Mucosa of descending colon (tissue), 3 donors: ENCODE measurements at regions of chr12 and their contacts with region 1.

Region 1: DNA sequence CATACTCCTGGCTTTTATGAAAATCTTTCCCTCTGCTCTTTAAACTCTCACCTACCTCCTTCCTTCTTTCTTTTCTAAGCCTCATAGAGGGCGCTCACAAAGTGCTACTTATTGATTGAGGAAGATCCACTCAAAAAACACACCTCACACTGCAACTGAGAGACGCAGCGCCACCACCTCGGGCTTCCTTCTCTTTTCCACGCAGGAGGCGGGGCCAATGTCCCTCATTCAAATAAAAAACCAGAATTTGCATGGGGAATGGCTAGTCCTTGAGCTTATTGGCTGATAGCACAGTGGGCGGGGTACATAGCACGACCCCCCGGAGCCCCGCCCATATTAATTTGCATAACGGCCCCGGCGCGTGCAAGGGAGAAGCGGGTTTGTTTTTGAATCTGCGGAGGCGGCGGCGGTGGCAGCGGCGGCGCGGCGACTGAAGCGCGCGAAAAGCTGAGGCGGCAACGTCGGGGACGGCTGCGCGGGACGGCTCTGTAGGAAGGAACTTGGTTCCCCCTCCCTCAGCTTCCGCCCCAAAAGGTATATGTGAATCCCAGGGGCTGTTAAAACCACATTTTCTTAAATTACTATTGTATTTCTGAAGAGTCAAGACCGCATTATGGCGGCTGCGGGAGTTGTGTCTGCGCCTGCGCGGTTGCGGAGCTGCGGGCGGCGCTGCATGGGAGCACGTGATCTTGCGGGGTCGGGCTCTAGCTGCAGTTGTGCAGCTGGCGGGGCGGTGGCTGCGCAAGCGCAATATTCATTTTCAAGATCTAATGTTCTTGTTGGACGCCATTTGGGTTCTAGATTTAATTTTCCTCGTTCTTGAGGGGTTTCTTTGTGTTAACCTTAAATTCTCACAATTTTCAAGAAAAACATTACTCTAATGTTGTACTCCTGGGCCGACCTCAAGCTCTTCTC is at the start of gene ATF7IP:
- DNase-seq: peak; percentile 96 to 98 (median 98)
- ATAC-seq: peak; percentile 96
- H3K4me3 ChIP-seq: peak within 1 kb of the TSS; percentile 56
- H3K4me1 ChIP-seq: no peaks in the 10 kb centered on the region
- CTCF ChIP-seq: peak; percentile 21
- total RNA-seq, gene ATF7IP: 40.3 to 84.1 (median 63.2) TPM

Region 2: DNA sequence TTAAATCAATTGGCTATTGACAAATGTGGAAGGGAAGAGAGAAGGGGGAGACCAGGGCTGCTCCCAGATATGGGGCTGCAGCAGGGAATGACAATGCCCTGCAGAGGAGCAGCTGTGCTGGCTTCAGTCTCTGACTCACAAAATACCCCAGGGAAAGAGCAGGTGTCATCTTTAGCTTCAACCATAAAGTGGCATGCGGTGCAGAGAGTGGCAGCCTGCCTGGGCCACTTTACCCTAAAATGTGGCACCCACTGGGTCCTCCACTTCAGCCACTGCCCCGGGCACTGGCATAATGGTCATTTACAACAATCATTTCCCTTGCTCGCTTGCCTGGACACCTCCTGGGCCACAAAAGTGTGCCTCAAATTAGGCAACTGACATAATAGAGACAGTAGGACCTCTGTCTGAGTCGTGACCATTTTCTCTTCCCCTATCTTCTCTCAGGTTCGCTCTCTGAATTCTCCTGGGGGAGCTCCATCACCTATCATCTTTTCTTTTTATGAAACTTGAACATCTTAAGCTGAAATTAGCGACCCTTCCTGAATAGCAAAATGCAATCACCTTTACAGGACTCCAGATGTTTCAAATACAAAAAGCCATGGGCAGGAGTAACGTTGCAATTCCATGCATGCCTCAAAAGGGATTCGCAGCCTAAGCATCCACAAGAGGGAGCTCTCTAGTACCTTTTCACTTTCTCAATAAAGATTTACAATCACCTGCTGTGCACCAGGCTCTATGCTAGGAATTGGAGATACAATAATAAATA is 179.9 kb before region 1 on chr12:
- intact Hi-C with region 1: loop called in 1 of 2 experiments (anchors 10 kb)
- DNase-seq: peak in 1 of 3 donors; percentile 87
- ATAC-seq: peak; percentile 95
- H3K4me3 ChIP-seq: no peak overlapping the region
- H3K4me1 ChIP-seq: peaks cover 6% of the 10 kb centered on the region
- CTCF ChIP-seq: peak; percentile 52

Region 3: DNA sequence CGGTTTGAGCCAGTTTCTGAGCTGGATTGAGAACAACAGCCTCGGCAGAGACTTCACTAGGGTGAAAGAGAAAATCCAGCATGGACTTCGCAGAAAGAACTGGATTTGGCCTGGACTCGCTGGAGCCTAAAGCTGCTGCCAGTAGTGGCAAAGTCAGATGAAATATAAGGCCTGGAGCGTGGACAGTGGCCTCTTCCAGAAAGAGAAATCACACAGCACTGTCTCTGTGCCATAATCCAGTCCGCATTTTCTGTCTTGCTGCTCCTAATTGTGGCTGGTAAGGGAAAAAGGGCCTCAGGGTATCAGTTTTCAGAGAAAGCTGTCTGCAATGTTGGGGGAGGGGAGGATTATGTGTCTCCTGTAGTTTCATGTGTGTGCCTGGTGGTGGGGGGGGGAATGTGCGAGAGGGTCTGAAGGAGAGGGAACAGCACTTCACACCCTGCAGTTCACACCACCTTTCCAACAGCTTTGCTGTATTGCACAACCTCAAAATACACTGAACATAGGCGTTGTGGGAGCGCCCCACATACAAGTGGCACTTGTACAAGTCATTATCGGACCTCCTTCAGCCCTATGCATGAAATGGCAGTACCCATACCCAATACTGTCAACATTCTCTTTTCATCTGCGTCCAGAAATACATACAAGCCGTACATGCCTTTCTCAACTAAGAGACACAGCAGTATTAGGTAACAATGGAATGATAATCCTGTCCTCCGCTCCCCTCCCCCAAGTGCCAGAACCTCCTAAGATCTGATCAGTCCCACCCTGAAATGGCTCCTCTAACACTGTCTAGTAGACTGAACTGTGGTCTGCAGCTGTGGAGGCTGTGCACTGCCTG is 107.6 kb before region 1 on chr12:
- intact Hi-C with region 1: loop called (anchors 5 to 10 kb)
- DNase-seq: peak in 2 of 3 donors; percentile 63 to 98
- ATAC-seq: peak; percentile 75
- H3K4me3 ChIP-seq: no peak overlapping the region
- H3K4me1 ChIP-seq: peaks cover 10% of the 10 kb centered on the region
- CTCF ChIP-seq: no peak